ENCODE measurements at regions of chr14 and their contacts with region 1.

Region 1: DNA sequence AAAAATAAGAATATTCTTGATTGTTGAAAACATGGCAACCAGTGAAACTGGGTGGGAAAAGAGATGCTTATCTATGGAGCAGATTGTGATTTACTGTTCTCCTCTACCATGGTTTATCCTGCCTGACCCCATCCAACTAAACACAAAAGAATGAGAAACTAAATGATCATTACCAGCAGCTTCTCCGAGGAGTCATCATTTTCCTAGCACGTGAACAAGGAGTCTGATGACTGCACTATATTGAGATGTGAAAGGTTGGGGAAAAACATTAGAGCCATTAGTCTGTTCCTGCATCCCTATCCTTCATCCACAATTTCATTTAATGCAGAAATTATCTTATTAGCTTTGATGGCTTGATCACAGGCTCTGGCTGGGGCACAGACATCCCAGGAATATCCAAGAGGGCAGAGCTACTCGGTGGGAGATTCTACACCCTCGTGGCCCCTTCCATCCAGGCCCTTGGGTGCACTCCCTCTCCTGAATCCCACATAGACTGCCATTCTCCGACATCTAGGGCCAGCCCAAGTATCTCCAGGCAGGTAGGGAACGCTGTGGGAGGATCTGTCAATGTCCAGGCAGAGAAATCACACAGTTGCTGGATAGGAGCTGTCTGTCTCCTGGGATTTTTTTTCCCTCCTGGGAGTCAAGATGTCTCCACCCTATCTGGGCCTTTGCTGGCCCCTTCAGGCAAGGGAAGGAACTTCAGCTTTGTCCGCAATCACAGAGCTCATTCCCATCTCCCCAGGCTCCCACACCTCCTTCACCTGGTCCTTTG is 43.3 kb upstream of the DHRS4 start:
- DNase-seq: peak; percentile 32 to 76 (median 55)
- H3K4me3 ChIP-seq: no peak overlapping the region
- H3K27ac ChIP-seq: no peak overlapping the region
- H3K4me1 ChIP-seq: no peaks in the 10 kb centered on the region
- H3K27me3 ChIP-seq: no peaks in the 10 kb centered on the region
- CTCF ChIP-seq: peak; percentile 71 to 83 (median 74)
- POLR2A ChIP-seq: no peak

Region 2: GRCh38 chr14:23631702-23632460 is 278.4 kb before region 1 on chr14:
- intact Hi-C with region 1: loop called in 1 of 2 experiments (anchors 5 kb)
- DNase-seq: peak; percentile 69 to 88 (median 77)
- H3K4me3 ChIP-seq: peak overlapping the region in 1 of 4 donors; percentile 44
- H3K27ac ChIP-seq: no peak overlapping the region
- H3K4me1 ChIP-seq: peaks cover 0 to 9% of the 10 kb centered on the region in 2 donors
- H3K27me3 ChIP-seq: no peaks in the 10 kb centered on the region
- CTCF ChIP-seq: peak; percentile 87 to 95 (median 93)
- POLR2A ChIP-seq: no peak

Region 3: DNA sequence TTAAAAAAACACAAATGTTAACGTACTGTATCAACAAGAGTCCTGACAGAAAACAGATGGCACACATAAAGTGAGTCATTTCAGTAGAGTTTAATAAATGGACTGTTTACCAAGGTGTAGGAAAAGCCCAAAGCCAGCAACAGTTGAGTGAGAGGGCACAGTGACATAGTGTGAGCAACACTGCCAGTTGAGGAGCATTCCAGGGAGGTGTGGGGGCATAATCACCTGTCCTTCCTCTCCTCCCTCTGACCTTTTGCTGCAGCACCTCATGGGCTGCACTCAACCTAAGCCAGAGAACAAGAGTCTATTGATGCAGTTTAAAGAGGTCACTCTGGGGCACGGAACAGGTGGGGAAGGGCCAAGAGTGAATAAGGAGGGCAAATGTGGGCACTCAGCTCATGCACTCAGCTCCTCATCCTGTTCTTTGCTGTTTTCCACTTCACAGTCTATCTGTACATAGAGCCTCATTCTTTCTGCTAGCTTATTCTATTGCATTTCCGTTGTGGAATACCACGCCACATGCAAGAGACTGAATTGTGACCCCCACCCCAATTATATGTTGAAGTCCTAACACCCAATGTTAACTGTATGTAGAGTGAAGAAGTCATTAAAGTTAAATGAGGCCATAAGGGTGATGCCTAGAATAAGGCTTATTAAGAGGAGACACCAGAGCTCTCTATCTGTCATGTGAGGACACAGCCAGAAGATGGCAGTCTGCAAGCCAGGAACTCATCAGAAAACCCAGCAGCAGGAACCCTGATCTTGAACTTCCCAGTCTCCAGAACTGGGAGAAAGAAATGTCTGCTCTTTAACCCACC is 244.7 kb before region 1 on chr14:
- intact Hi-C with region 1: loop called in 1 of 2 experiments (anchors 10 kb)
- DNase-seq: peak; percentile 28 to 77 (median 54)
- H3K4me3 ChIP-seq: no peak overlapping the region
- H3K27ac ChIP-seq: no peak overlapping the region
- H3K4me1 ChIP-seq: no peaks in the 10 kb centered on the region
- H3K27me3 ChIP-seq: no peaks in the 10 kb centered on the region
- CTCF ChIP-seq: peak; percentile 28 to 61 (median 51)
- POLR2A ChIP-seq: no peak

Region 4: GRCh38 chr14:23727566-23728335 is 182.5 kb before region 1 on chr14:
- intact Hi-C with region 1: loop called in 1 of 2 experiments (anchors 10 kb)
- DNase-seq: peak in 5 of 7 donors; percentile 43 to 71 (median 58)
- H3K4me3 ChIP-seq: no peak overlapping the region
- H3K27ac ChIP-seq: no peak overlapping the region
- H3K4me1 ChIP-seq: no peaks in the 10 kb centered on the region
- H3K27me3 ChIP-seq: no peaks in the 10 kb centered on the region
- CTCF ChIP-seq: peak; percentile 38 to 58 (median 52)
- POLR2A ChIP-seq: no peak

Measured in adrenal gland (tissue), 19 donors.